ENCODE measurements at regions of chr1 and their contacts with region 1.

Region 1: GRCh38 chr1:54894271-54894670 is 7.3 kb upstream of the DHCR24 start:
- DNase-seq: no peak
- H3K4me3 ChIP-seq: no peak overlapping the region
- H3K27me3 ChIP-seq: no peaks in the 10 kb centered on the region
- CTCF ChIP-seq: no peak

Region 2: DNA sequence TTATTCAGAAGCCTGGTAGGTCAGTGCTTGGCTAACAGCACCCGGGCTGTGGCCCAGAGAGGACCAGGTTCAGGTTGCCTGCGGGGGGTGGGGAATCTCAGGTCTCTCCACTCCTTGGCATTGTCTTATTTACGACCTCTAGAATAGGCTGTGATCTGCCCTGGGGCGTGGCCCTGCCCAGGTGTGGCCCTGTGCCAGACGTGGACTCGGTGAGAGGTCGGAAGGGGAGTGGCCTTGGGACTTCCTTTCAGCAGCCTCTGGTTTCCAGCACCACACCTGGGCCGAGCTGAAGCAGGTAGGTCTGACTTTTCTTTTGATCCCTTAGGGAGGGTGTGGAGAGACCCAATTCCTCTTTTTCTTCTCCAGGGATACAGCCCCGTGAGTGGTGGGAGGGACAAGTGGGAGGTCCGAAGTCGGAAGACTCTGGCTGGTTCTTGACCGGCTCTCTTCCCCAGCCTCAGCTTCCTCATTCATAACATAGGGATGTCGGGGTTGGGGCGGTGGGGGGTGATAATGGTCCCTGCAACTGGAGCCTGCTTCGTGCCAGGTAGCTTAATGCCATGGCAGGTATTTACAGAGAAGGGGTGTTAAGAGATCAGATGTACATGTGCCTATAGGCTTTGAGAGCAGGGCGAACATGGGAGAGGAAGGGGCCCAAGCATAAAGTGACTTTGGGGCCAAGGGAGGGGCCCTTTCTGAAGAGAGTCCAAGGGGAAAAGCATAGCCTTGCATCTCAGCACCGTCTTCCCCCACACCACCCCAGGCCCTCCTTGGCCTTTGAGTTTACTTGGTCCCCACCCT is 329.8 kb before region 1 on chr1:
- CTCF ChIA-PET with region 1: no interaction called
- POLR2A ChIA-PET with region 1: no interaction called
- DNase-seq: no peak
- H3K4me3 ChIP-seq: no peak overlapping the region
- H3K27me3 ChIP-seq: no peaks in the 10 kb centered on the region
- CTCF ChIP-seq: no peak

Region 3: GRCh38 chr1:54823670-54824069 is 70.6 kb before region 1 on chr1:
- CTCF ChIA-PET with region 1: no interaction called
- POLR2A ChIA-PET with region 1: interaction called, 12 read pairs
- DNase-seq: no peak
- H3K4me3 ChIP-seq: no peak overlapping the region
- H3K27me3 ChIP-seq: 0 out of 2 replicates have a peak, but pooled peaks cover 2% of the 10 kb centered on the region
- CTCF ChIP-seq: no peak

Measured in BJ (cell line).